Calu3 (cell line): ENCODE measurements at regions of chr18 and their contacts with region 1.

Region 1: GRCh38 chr18:4653418-4653817 is 198.3 kb upstream of the DLGAP1 start:
- DNase-seq: no peak
- H3K4me3 Mint-ChIP-seq: no peak overlapping the region
- H3K27ac Mint-ChIP-seq: no peak overlapping the region
- H3K4me1 Mint-ChIP-seq: peaks cover 4% of the 10 kb centered on the region
- H3K27me3 Mint-ChIP-seq: no peaks in the 10 kb centered on the region
- CTCF ChIP-seq: no peak

Region 2: GRCh38 chr18:4524096-4524495 is 129.3 kb before region 1 on chr18:
- CTCF ChIA-PET with region 1: no interaction called
- intact Hi-C with region 1: no loop called
- DNase-seq: no peak
- H3K4me3 Mint-ChIP-seq: no peak overlapping the region
- H3K27ac Mint-ChIP-seq: no peak overlapping the region
- H3K4me1 Mint-ChIP-seq: no peaks in the 10 kb centered on the region
- H3K27me3 Mint-ChIP-seq: no peaks in the 10 kb centered on the region
- CTCF ChIP-seq: no peak

Region 3: GRCh38 chr18:4639628-4640310 is 13.6 kb before region 1 on chr18:
- CTCF ChIA-PET with region 1: no interaction called
- intact Hi-C with region 1: loop called (anchors 2 kb)
- DNase-seq: no peak
- H3K4me3 Mint-ChIP-seq: no peak overlapping the region
- H3K27ac Mint-ChIP-seq: no peak overlapping the region
- H3K4me1 Mint-ChIP-seq: peaks cover 11% of the 10 kb centered on the region
- H3K27me3 Mint-ChIP-seq: no peaks in the 10 kb centered on the region
- CTCF ChIP-seq: no peak

Region 4: DNA sequence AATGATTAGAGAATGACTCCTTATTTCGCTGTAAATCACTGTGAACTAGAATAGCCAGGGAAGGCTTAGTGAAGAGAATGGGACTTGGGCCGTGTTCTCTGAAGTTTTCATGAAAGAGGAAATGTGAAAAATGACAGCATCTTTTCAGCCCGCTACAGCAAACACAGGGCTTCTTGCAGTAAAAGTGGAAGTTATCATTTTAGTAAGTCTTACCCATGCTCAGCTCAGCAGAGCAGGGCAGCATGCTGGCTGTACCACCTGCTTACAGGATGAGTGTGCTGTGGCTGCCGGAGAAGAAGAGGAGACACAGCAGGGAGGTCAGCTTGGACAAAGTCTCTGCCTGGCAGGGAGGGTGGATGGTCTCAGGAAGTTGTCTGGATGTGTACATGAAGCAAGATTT is 102.4 kb after region 1 on chr18:
- CTCF ChIA-PET with region 1: no interaction called
- intact Hi-C with region 1: no loop called
- DNase-seq: no peak
- H3K4me3 Mint-ChIP-seq: no peak overlapping the region
- H3K27ac Mint-ChIP-seq: no peak overlapping the region
- H3K4me1 Mint-ChIP-seq: peaks cover 6% of the 10 kb centered on the region
- H3K27me3 Mint-ChIP-seq: no peaks in the 10 kb centered on the region
- CTCF ChIP-seq: no peak